SK-N-SH (cell line): ENCODE measurements at regions of chr7 and their contacts with region 1.

Region 1: GRCh38 chr7:28926871-28927597 is 31.1 kb downstream of the TRIL start:
- DNase-seq: peak; percentile 72
- H3K4me3 ChIP-seq: peak overlapping the region; percentile 55 to 65
- H3K27ac ChIP-seq: peak overlapping the region in 1 of 2 experiments; percentile 45; a peak in 1 of 4 replicates
- H3K4me1 ChIP-seq: peaks cover 0 to 22% of the 10 kb centered on the region in 2 experiments; a peak in 3 of 4 replicates
- H3K27me3 ChIP-seq: 0 out of 2 replicates have a peak, but pooled peaks cover 15% of the 10 kb centered on the region
- CTCF ChIP-seq: peak; percentile 99
- EP300 ChIP-seq: peak in 1 of 2 experiments; percentile 42; a peak in 1 of 4 replicates
- RAD21 ChIP-seq: peak; percentile 99

Region 2: DNA sequence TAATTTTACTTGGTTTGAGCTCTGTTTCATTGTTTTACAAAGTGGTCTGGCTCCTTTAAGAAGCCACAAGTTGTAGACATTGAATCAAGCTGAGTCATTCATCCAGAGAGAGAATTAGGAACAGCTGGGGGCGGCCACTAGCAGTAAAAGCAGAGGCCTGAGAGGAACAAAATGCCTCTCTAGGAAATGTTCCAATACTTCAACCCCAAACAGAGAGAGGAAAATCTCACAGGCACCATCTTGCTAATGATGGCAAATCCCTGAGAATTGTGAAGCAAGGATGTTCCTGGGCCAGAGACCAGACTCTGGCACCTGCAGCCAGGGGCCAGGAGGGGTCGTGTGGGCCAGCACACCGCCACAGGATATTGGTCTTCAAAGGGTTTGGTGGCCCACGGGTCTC is 57.6 kb after region 1 on chr7:
- CTCF ChIA-PET with region 1: interaction called, 66 read pairs
- POLR2A ChIA-PET with region 1: no interaction called
- DNase-seq: peak; percentile 42
- H3K4me3 ChIP-seq: no peak overlapping the region; a peak in 1 of 4 replicates
- H3K27ac ChIP-seq: peak overlapping the region; percentile 85 to 97
- H3K4me1 ChIP-seq: peaks cover 26 to 62% of the 10 kb centered on the region in 2 experiments
- H3K27me3 ChIP-seq: no peaks in the 10 kb centered on the region
- CTCF ChIP-seq: no peak
- EP300 ChIP-seq: peak; percentile 58 to 79; a peak in 3 of 4 replicates
- RAD21 ChIP-seq: peak; percentile 21; the same call in 1 of the 2 replicates

Region 3: DNA sequence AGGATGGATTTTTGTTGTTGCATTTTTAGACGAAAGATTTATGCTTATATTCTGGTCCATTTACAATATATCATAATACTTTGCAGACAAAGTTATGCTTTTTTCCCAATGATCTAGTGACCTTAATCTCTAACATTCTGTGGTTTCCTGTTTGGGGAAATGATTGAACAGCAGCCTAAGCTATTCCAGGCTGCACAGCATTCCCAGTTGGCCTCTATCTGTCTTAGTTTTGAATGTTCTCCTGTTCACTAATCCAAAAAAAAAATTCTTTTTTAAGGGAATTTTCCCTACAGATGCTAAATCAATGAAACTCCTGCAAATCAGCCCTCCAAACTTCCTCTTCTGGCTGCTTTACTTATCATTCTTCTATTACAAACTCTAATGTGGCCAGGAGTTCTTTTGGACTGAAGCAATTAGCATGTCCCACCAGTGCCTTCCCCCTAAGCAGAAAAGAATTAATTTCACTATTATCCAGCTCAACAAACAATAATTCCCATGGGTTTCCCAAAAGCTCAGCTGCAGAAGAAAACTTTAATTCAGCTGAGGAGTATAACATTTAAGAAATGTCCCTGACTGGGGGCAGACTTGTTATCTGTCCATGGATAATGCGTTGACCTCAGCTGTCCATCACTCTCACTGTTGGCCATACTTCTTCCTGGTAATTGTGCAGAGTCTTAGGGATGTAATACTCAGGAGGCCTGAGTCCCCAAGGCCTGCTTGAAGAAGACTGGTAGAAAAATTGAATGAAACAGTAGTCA is 113.0 kb after region 1 on chr7:
- CTCF ChIA-PET with region 1: interaction called, 10 read pairs
- POLR2A ChIA-PET with region 1: no interaction called
- DNase-seq: no peak
- H3K4me3 ChIP-seq: no peak overlapping the region; a peak in 1 of 4 replicates
- H3K27ac ChIP-seq: peak overlapping the region in 1 of 2 experiments; percentile 74; a peak in 1 of 4 replicates
- H3K4me1 ChIP-seq: peaks cover 0 to 26% of the 10 kb centered on the region in 2 experiments
- H3K27me3 ChIP-seq: no peaks in the 10 kb centered on the region
- CTCF ChIP-seq: no peak
- EP300 ChIP-seq: no peak
- RAD21 ChIP-seq: no peak

Region 4: DNA sequence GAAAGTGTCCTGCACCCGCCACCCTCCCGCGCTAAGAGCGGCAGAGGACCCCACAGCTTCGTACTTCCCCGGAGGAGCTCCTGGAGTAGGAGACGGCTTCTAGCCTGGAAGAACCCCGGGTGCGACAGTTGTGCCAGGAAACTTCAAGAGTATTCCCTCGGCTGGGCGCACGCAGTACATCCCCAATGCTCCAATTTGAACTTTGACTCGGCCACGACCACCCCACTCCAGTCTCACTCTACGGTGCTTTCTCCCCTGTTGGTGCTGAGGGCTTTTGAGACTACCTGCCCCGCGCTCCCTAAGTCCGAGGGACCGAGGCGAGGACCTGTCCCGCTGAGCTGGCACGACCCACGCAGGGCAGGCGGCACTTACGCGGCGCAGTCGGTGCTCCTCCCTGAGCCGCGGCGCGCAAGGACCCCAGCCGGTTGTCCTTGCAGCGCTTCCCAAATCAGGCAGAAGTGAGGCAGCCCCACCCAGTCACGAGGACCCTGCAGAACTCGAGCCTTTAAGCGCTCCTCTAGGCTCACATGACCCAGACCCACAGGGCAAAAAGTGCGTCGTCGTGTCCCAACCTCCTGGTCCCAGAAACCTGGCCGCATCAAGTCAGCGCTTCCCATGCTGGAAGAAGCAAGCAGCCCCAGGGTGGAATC is 219.1 kb after region 1 on chr7 and contains the start of gene CPVL:
- CTCF ChIA-PET with region 1: interaction called, 17 read pairs
- POLR2A ChIA-PET with region 1: no interaction called
- DNase-seq: peak; percentile 62
- H3K4me3 ChIP-seq: peak within 1 kb of the TSS in 1 of 2 experiments; percentile 31; a peak in 2 of 4 replicates
- H3K27ac ChIP-seq: no peak within 1 kb of the TSS
- H3K4me1 ChIP-seq: peaks cover 0 to 11% of the 10 kb centered on the region in 2 experiments; a peak in 1 of 4 replicates
- H3K27me3 ChIP-seq: peaks cover 27% of the 10 kb centered on the region
- CTCF ChIP-seq: no peak
- EP300 ChIP-seq: no peak
- RAD21 ChIP-seq: no peak
- polyA plus RNA-seq, gene CPVL: 0.16 TPM in 1 of 2 replicates, not detected in the other

Region 5: GRCh38 chr7:29270594-29271318 is 343.7 kb after region 1 on chr7:
- CTCF ChIA-PET with region 1: no interaction called
- POLR2A ChIA-PET with region 1: no interaction called
- DNase-seq: peak; percentile 49
- H3K4me3 ChIP-seq: no peak overlapping the region
- H3K27ac ChIP-seq: no peak overlapping the region; a peak in 1 of 4 replicates
- H3K4me1 ChIP-seq: peaks cover 0 to 12% of the 10 kb centered on the region in 2 experiments; a peak in 3 of 4 replicates
- H3K27me3 ChIP-seq: no peaks in the 10 kb centered on the region; the same call in 1 of the 2 replicates
- CTCF ChIP-seq: no peak
- EP300 ChIP-seq: no peak
- RAD21 ChIP-seq: no peak

Region 6: DNA sequence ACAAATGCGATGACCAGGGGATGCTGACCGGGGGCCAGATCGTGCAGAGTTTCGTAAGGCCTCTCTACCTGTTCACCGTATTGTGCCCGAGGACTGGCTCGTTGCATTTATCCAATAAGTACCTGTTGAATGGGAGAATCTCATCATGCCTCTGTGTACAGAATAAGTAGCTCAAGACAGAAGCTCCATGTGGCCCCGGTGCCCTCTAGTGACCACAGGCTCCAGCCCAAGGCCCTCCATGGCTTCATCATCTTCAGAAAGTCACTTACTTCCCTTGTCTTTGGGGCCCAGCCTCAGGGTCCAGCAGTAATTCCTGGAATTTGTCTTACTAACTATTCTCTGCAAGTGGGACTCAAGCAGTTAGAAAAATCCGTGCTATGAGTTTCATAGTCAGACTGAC is 418.6 kb after region 1 on chr7:
- CTCF ChIA-PET with region 1: interaction called, 93 read pairs
- POLR2A ChIA-PET with region 1: no interaction called
- DNase-seq: peak; percentile 63
- H3K4me3 ChIP-seq: no peak overlapping the region
- H3K27ac ChIP-seq: no peak overlapping the region
- H3K4me1 ChIP-seq: peaks cover 4% of the 10 kb centered on the region in 2 experiments; a peak in 1 of 4 replicates
- H3K27me3 ChIP-seq: no peaks in the 10 kb centered on the region
- CTCF ChIP-seq: peak; percentile 37
- EP300 ChIP-seq: no peak
- RAD21 ChIP-seq: peak; percentile 93